Posterior cingulate gyrus (tissue), 11 donors: ENCODE measurements at regions of chr15 and their contacts with region 1.

Region 1: GRCh38 chr15:93030430-93031105 is 58.4 kb downstream of the RGMA start:
- DNase-seq: peak; percentile 62 to 96 (median 80)

Region 2: DNA sequence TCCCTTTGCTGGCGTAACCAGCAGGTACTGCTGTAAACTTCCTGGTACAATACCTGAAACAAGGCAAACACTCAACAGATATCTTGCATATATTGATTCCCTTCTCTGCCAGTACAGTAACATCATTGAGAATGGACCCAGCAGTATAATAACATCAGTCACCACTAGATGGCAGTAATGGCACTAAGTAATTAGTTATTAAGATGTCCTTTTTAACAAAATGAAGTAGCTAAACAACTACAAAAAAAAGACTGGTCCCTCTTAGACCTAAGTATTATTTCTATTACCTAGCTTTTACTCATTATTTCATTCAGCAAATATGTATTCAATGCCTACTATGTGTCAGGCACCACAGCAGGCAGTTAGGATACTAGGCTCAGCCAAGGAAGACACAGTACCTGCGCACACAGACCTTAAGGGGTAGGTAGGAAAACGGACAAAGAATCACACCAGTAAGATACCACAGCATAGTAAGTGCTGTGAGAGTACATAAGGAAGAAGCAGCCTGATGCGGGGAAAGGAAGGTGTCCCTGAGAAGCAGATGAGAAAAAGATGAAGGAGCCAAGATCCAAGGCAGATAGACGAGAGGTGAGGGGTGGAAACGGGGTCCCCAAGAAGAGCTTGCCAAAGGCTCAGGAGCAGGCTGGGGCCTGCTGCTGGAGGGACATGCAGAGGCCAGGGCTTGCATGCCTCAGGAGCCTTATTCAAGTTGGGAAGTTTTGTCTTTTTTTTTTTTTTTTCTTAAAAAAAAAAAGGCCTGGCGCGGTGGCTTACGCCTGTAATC is 233.2 kb before region 1 on chr15:
- intact Hi-C with region 1: loop called (anchors 5 kb)
- DNase-seq: peak in 1 of 10 donors; percentile 46

Region 3: GRCh38 chr15:92968926-92969651 is 61.5 kb before region 1 on chr15:
- intact Hi-C with region 1: no loop called
- DNase-seq: no peak

Region 4: GRCh38 chr15:93063262-93063671 is 32.7 kb after region 1 on chr15:
- intact Hi-C with region 1: no loop called
- DNase-seq: peak in 2 of 10 donors; percentile 58 to 75

Region 5: GRCh38 chr15:93656040-93656439 is 625.5 kb after region 1 on chr15:
- intact Hi-C with region 1: no loop called
- DNase-seq: no peak

Region 6: GRCh38 chr15:93974804-93975481 is 944.4 kb after region 1 on chr15:
- intact Hi-C with region 1: loop called (anchors 10 kb)
- DNase-seq: no peak

Region 7: DNA sequence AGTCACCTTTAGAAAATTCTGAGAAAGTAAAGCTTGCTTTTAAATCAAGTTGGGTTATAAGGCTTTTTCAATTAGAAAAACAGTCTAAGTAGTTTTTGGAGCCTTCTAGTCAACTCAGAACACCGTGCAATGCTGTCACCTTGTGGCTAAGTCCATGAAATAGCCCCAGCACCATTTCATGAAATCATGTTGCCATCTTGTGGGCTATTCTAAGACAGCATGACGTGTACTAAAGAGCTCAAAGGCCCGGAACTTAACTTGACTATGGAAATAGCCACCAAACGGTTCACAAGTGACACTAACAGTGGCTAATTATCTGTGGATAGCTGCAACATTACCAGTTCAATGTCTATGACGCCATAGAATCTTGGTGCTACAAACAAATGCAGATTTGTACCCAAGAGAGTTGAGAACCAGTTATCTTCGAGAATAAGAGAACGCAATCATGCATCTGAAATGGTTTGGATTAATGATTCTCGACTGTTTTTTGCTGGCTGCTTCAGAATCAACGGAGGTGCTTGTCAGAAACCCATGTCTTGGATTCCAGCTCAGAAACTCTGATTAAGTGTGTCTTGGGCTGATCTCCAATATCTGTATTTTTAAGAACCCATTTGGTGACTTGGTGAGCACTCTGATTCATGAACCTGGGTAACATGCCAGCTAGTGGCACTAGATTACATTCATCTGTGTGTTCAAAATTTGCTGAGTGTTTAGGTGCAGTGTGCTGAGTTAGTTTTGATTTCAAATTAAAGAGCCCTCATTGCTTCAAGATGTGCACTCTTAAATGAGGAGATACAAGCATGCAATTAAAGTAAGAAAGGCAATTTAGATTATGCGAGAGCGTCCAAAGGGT is 1089.6 kb after region 1 on chr15:
- intact Hi-C with region 1: loop called (anchors 1 kb)
- DNase-seq: peak in 7 of 10 donors; percentile 29 to 91 (median 59)